ENCODE measurements at regions of chr13 and their contacts with region 1.

Region 1: GRCh38 chr13:31945202-31945978 is 86.2 kb upstream of the FRY start:
- DNase-seq: peak; percentile 62
- H3K4me3 ChIP-seq: no peak overlapping the region; the same call in 1 of the 2 replicates
- H3K27me3 ChIP-seq: no peaks in the 10 kb centered on the region
- CTCF ChIP-seq: no peak

Region 2: DNA sequence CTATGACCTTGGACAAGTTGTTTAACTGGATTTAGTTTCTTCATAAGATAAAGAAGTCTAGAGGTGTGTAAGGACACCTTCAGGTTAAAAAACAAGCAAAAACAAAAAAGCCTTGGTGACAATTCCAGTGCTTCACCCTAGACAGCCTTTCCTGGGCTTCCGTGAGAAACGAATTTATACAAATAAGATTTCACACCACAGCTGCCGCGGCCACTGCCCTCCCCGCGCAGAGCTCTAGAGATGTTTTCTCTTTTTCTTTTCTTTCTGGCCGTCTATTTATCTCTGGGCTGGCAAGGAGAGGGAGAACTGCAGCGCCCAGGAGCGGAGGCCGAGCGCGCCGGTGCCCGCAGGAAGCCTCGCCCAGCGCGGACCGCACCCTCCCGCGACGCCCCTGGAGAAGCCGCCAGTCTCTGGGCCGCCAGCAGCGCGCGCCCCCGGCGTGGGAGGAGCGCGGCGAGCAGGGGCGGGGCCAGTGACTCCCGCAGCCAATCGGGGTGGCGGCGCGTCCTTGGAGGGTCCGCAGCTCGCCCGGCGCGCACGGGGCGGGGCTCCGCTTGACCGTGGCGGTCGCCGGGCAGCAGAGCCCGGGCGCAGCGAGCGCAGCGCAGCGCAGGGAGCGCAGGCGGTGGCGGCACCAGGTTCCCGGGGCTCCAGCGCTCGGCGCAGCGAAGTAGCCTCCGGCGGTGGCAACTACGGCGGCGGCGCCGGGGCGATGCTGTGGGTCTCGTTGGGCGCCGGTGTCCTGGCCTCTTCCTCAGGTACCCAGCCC is 99.0 kb before region 1 on chr13:
- CTCF ChIA-PET with region 1: no interaction called
- POLR2A ChIA-PET with region 1: no interaction called
- DNase-seq: peak; percentile 49
- H3K4me3 ChIP-seq: peak overlapping the region; percentile 84
- H3K27me3 ChIP-seq: peaks cover 14% of the 10 kb centered on the region
- CTCF ChIP-seq: no peak

Region 3: GRCh38 chr13:31956980-31957644 is 11.7 kb after region 1 on chr13:
- CTCF ChIA-PET with region 1: interaction called, 11 read pairs
- POLR2A ChIA-PET with region 1: interaction called, 5 read pairs
- DNase-seq: no peak
- H3K4me3 ChIP-seq: no peak overlapping the region
- H3K27me3 ChIP-seq: no peaks in the 10 kb centered on the region
- CTCF ChIP-seq: no peak

Region 4: GRCh38 chr13:32086366-32086765 is 141.0 kb after region 1 on chr13:
- CTCF ChIA-PET with region 1: no interaction called
- POLR2A ChIA-PET with region 1: no interaction called
- DNase-seq: peak; percentile 17
- H3K4me3 ChIP-seq: no peak overlapping the region
- H3K27me3 ChIP-seq: no peaks in the 10 kb centered on the region
- CTCF ChIP-seq: no peak

Region 5: GRCh38 chr13:32362574-32362973 is 417.2 kb after region 1 on chr13:
- CTCF ChIA-PET with region 1: no interaction called
- POLR2A ChIA-PET with region 1: no interaction called
- DNase-seq: no peak
- H3K4me3 ChIP-seq: no peak overlapping the region
- H3K27me3 ChIP-seq: no peaks in the 10 kb centered on the region
- CTCF ChIP-seq: no peak